ENCODE measurements at regions of chr12 and their contacts with region 1.

Region 1: DNA sequence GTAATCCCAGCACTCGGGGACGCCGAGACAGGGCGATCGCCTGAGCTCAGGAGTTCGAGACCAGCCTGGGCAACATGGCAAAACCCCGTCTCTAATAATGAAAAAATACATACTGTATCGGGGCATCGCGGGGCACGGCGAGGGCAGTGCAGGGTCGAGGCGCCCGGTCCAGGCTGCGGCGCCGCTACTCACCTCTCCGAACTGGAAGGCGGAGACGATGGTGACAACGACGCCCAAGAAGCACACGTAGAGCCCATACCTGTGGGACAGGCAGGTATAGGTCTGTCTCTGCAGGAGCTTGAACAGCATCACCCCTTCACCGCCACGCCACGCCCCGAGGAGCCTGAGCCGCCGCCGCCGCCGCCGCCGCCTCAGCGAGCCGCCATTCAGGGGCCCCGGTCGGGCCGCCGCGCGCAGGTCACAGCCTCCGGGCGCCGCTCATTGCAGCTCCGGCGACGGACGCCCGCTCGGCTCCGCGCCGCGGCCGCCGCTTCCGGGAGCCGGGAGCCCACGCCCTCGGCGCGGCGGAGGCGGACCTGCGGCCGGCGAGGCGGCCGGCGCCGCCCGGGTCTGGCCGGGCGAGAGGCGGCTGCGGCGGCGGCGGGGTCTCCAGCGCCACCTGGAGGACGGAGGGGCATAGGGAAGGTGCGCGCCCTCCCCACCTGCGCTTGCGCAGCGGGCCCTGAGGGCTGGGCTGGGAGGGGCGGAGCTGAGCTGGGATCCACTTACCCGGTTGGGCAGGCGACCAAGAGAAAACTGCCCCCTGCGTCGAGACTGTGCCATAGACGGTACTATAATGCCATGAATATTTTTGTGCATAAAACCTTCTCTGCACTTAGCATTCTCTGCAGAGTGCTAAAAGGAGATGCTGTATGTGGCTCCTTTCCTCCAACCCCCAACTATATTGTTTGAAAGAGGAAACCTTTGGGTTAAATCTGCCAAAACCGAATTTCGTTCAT is at the start of gene GNPTAB:
- DNase-seq: peak; percentile 98
- ATAC-seq: peak; percentile 95
- H3K4me3 Mint-ChIP-seq: peak within 1 kb of the TSS; percentile 95
- H3K27ac Mint-ChIP-seq: peak within 1 kb of the TSS; percentile 91
- H3K4me1 Mint-ChIP-seq: peaks cover 41% of the 10 kb centered on the region
- H3K27me3 Mint-ChIP-seq: no peaks in the 10 kb centered on the region
- total RNA-seq, gene GNPTAB: 20.4 to 24.0 TPM

Region 2: GRCh38 chr12:101280006-101280505 is 550.6 kb before region 1 on chr12 and contains the start of gene UTP20:
- CTCF ChIA-PET with region 1: no interaction called
- POLR2A ChIA-PET with region 1: no interaction called
- intact Hi-C with region 1: loop called in 1 of 2 experiments (anchors 1 kb)
- DNase-seq: peak; percentile 97
- ATAC-seq: peak; percentile 100
- H3K4me3 Mint-ChIP-seq: peak within 1 kb of the TSS; percentile 93
- H3K27ac Mint-ChIP-seq: peak within 1 kb of the TSS; percentile 85
- H3K4me1 Mint-ChIP-seq: peaks cover 17% of the 10 kb centered on the region
- H3K27me3 Mint-ChIP-seq: peaks cover 9% of the 10 kb centered on the region
- total RNA-seq, gene UTP20: 29.4 to 33.1 TPM

Region 3: DNA sequence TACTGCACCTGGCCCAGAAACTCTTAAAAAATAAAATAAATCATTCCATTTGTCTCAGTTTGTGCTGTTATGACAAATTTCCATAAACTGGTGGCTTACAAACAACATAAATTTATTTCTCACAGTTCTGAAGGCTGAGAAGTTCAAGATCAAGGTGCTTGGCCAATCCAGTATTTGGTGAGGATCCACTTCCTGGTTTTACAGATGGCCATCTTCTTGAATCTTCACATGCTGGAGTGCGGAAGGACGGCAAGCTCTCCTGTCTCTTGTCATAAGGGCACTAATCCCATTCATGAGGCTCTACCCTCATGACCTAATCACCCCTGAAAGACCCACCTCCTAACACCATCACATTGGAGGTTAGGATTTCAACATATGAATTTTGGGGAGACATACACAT is 265.7 kb before region 1 on chr12:
- CTCF ChIA-PET with region 1: no interaction called
- POLR2A ChIA-PET with region 1: no interaction called
- intact Hi-C with region 1: loop called in 1 of 2 experiments (anchors 10 kb)
- DNase-seq: peak; percentile 6
- ATAC-seq: no peak
- H3K4me3 Mint-ChIP-seq: no peak overlapping the region
- H3K27ac Mint-ChIP-seq: no peak overlapping the region
- H3K4me1 Mint-ChIP-seq: peaks cover 14% of the 10 kb centered on the region
- H3K27me3 Mint-ChIP-seq: peaks cover 14% of the 10 kb centered on the region

Region 4: GRCh38 chr12:101773650-101774162 is 56.9 kb before region 1 on chr12:
- CTCF ChIA-PET with region 1: interaction called, 280 read pairs
- POLR2A ChIA-PET with region 1: no interaction called
- intact Hi-C with region 1: loop called (anchors 1 kb)
- DNase-seq: peak; percentile 78
- ATAC-seq: peak; percentile 87
- H3K4me3 Mint-ChIP-seq: no peak overlapping the region
- H3K27ac Mint-ChIP-seq: peak overlapping the region; percentile 65
- H3K4me1 Mint-ChIP-seq: peaks cover 9% of the 10 kb centered on the region
- H3K27me3 Mint-ChIP-seq: no peaks in the 10 kb centered on the region

Region 5: DNA sequence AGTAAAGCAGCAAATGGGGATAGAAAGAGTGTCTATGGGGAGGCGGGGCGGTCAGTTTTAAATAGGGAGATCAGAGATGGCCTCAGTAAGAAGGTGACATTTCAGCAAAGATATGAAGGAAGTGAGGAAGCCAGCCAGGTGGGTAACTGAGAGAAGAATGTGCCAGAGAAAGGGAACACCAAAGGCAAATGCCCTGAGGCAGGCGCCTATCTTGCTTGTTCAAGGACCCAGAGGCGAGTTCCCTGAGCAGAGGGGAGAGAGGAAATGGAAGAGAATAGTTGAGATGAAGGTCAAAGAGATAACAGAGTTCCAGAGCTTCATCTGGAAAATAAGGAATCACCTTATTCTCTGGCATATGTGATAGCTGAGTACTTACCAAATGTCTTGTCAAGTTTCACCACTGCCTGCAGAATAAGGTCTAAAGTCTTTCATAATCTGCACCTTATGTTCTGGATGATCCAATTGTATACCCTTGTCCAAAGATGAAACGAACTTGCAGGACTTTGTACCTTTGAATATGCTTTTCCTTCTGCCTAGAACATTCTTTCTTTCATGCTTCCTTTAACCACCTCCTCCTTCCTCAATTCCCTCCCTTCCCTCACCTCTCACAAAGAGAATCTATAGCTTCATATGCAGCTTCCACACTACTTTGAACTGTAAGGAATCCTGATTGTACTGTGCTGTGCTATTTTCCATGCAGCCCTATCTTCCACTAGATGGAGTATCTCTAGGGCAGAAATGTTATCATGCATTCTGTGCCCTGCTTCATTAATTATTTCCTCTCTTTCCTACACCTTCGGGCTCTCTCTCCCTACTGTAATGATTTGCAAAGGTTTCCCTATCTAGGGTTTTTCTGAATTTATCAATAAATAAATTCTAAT is 38.4 kb before region 1 on chr12:
- CTCF ChIA-PET with region 1: interaction called, 5 read pairs
- POLR2A ChIA-PET with region 1: no interaction called
- intact Hi-C with region 1: loop called in 1 of 2 experiments (anchors 1 kb)
- DNase-seq: no peak
- ATAC-seq: no peak
- H3K4me3 Mint-ChIP-seq: no peak overlapping the region
- H3K27ac Mint-ChIP-seq: no peak overlapping the region
- H3K4me1 Mint-ChIP-seq: peaks cover 25% of the 10 kb centered on the region
- H3K27me3 Mint-ChIP-seq: no peaks in the 10 kb centered on the region

Region 6: DNA sequence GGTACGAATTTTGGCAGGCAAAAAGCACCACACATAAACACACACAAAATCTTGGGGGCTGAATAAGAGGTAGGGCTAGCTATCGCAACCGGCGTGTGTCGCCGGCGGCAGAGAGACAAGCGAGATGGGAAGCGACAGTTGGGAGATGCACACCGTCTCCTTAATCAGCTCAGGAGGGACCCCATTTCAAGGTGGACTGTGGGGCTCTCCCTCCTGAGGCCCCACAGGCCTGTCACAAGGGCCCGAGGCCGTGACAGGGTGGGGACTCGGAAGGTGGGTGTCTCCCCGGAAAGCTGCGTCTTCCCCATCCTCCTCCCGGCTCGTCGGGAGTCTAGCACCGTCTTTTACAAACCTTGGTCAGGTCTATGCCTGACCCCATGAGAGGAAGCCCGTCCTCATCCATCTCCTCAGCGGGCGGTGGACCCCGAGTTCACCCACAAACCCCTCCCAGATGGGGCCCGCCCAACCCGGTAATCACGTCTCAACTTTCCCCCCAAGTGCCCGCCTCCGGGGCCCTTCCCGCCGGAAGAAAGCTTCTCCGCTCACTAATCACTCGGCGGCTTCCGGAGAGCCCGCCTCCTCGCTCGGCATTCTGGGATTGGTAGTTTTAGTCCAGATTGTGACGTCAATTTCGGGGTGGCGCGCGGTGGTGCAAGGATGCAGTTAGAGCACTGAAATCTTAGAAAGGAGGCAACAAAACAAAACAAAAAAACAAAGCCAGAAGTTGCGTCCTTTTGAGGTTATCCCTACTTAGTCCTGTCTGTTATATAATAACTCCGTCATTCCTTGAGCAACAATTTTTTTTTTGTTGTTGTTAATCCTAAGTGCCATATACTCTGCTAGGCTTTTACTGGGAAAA is 231.1 kb after region 1 on chr12 and contains the start of gene WASHC3:
- CTCF ChIA-PET with region 1: no interaction called
- POLR2A ChIA-PET with region 1: no interaction called
- intact Hi-C with region 1: loop called in 1 of 2 experiments (anchors 5 kb)
- DNase-seq: peak; percentile 98
- ATAC-seq: peak; percentile 93
- H3K4me3 Mint-ChIP-seq: peak within 1 kb of the TSS; percentile 94
- H3K27ac Mint-ChIP-seq: peak within 1 kb of the TSS; percentile 99
- H3K4me1 Mint-ChIP-seq: peaks cover 29% of the 10 kb centered on the region
- H3K27me3 Mint-ChIP-seq: no peaks in the 10 kb centered on the region
- total RNA-seq, gene WASHC3: 36.1 to 64.4 TPM

Region 7: DNA sequence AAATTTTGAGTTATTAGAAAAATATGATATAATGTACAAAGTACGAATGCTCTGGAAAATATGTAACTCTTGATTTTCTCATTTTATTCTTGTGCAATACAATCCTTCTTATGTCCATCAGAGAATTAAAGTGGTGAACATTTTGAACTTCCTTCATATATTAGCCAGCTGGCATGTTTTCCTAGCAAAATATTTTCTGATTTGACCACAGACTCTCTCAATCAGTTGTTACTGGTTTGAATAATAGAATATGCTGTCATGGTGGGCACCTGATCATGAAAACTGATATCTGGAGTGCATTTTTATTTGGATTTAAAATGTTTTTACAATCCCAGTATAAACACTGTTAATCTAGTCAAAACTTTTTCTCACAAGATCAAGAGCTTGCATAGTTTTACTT is 313.6 kb after region 1 on chr12:
- CTCF ChIA-PET with region 1: no interaction called
- POLR2A ChIA-PET with region 1: no interaction called
- intact Hi-C with region 1: no loop called
- DNase-seq: no peak
- ATAC-seq: no peak
- H3K4me3 Mint-ChIP-seq: no peak overlapping the region
- H3K27ac Mint-ChIP-seq: no peak overlapping the region
- H3K4me1 Mint-ChIP-seq: peaks cover 9% of the 10 kb centered on the region
- H3K27me3 Mint-ChIP-seq: no peaks in the 10 kb centered on the region

Measured in activated CD4-positive, alpha-beta T cell treated with anti-CD3 and anti-CD28 coated beads for 36 hours (primary cell).